Calu3 (cell line): ENCODE measurements at regions of chr1 and their contacts with region 1.

Region 1: DNA sequence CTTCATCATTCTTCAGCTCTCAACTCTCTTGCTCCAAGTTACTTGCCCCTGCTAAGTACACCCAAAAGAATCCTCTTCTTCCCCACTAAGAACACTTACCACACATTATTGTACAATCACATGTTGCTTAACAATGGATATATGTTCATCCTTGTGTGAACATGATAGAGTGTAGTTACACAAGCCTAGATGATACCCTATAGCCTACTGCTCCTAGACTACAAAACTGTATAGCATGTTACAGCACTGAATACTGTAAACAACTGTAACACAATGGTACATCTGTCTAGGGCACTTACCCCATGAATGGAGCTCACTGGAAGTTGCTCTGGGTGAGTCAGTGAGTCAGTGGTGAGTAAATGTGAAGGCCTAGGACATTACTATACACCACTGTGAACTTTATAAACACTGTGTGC is 77.4 kb downstream of the RERE start:
- DNase-seq: peak; percentile 24
- H3K4me3 Mint-ChIP-seq: no peak overlapping the region
- H3K27ac Mint-ChIP-seq: no peak overlapping the region
- H3K4me1 Mint-ChIP-seq: peaks cover 22% of the 10 kb centered on the region
- H3K27me3 Mint-ChIP-seq: no peaks in the 10 kb centered on the region
- CTCF ChIP-seq: no peak

Region 2: GRCh38 chr1:8590526-8591351 is 149.3 kb before region 1 on chr1:
- CTCF ChIA-PET with region 1: no interaction called
- intact Hi-C with region 1: no loop called
- DNase-seq: no peak
- H3K4me3 Mint-ChIP-seq: no peak overlapping the region
- H3K27ac Mint-ChIP-seq: no peak overlapping the region
- H3K4me1 Mint-ChIP-seq: peaks cover 8% of the 10 kb centered on the region
- H3K27me3 Mint-ChIP-seq: no peaks in the 10 kb centered on the region
- CTCF ChIP-seq: no peak

Region 3: GRCh38 chr1:8817406-8818324 is 77.6 kb after region 1 on chr1 and contains the start of gene RERE:
- CTCF ChIA-PET with region 1: interaction called, 4 read pairs
- intact Hi-C with region 1: loop called (anchors 5 kb)
- DNase-seq: peak; percentile 95
- H3K4me3 Mint-ChIP-seq: peak within 1 kb of the TSS; percentile 81
- H3K27ac Mint-ChIP-seq: peak within 1 kb of the TSS; percentile 89
- H3K4me1 Mint-ChIP-seq: peaks cover 43% of the 10 kb centered on the region
- H3K27me3 Mint-ChIP-seq: no peaks in the 10 kb centered on the region
- CTCF ChIP-seq: no peak
- total RNA-seq, gene RERE: 45.9 and 52.8 TPM in 2 replicates